CD4-positive, alpha-beta memory T cell (primary cell): ENCODE measurements at regions of chr20 and their contacts with region 1.

Region 1: DNA sequence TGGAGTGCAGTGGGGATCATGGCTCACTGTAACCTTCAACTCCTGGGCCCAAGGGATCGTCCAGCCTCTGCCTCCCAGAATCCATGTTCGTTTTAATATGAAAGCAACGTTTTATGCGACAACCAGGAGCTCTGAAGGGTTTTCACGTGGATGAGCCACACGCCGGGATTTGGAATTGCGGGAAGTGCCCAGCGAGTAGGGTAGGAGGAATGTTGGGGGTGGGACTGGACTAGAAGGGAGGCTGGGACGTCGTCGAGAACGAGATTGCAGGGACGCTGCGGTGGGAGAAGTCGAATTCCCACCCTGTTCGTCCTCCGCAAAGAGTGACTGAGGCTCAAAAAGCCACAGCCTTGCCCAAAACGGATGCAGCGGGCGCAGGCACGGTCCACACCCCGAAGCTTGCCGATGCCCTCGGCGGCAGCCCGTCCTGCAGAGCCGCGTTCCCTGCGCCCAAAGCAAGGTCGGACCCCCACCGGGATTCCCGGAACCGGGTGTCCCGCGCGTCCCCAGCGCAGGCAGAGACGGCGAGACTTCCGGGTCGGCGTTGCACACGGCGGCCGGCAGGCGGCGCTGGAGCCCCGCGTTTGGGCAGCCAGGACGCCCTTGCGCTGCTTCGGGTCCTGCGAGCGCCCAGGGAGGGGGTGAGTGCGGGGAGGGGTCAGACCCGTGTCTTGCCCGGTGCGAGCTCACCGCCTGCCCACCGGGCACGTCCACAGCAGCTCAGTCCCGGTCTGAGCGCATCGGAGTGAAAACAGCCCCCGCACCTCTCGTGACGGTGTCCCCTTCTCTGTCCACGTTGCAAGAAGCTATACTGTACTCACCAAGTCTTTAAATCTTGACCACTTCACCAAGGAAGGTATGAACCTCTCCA is 87.8 kb downstream of the DHX35 start:
- DNase-seq: peak; percentile 67 to 83 (median 76)
- H3K4me3 ChIP-seq: peak overlapping the region; percentile 73 to 74
- H3K4me3 Mint-ChIP-seq: peak overlapping the region; percentile 83 to 93 (median 88)
- H3K27ac ChIP-seq: peak overlapping the region; percentile 45
- H3K27ac Mint-ChIP-seq: peak overlapping the region in 6 of 7 donors; percentile 30 to 93 (median 89)
- H3K4me1 ChIP-seq: peaks cover 11% of the 10 kb centered on the region
- H3K4me1 Mint-ChIP-seq: peaks cover 6 to 12% (median 9%) of the 10 kb centered on the region in 4 donors
- H3K27me3 ChIP-seq: no peaks in the 10 kb centered on the region
- H3K27me3 Mint-ChIP-seq: peaks cover 0 to 6% of the 10 kb centered on the region in 2 donors

Region 2: GRCh38 chr20:38645980-38646858 is 403.7 kb before region 1 on chr20:
- CTCF ChIA-PET with region 1: interaction called, 26 read pairs
- POLR2A ChIA-PET with region 1: no interaction called
- intact Hi-C with region 1: loop called (anchors 1 kb)
- DNase-seq: peak; percentile 84 to 91 (median 88)
- H3K4me3 ChIP-seq: peak overlapping the region in 1 of 2 donors; percentile 39
- H3K4me3 Mint-ChIP-seq: peak overlapping the region; percentile 67 to 87 (median 82)
- H3K27ac ChIP-seq: no peak overlapping the region
- H3K27ac Mint-ChIP-seq: peak overlapping the region in 6 of 7 donors; percentile 52 to 88 (median 75)
- H3K4me1 ChIP-seq: peaks cover 11% of the 10 kb centered on the region
- H3K4me1 Mint-ChIP-seq: peaks cover 5 to 8% (median 7%) of the 10 kb centered on the region in 4 donors
- H3K27me3 ChIP-seq: peaks cover 9% of the 10 kb centered on the region
- H3K27me3 Mint-ChIP-seq: peaks cover 24 to 36% of the 10 kb centered on the region in 2 donors

Region 3: GRCh38 chr20:38715646-38716045 is 334.3 kb before region 1 on chr20:
- CTCF ChIA-PET with region 1: no interaction called
- POLR2A ChIA-PET with region 1: no interaction called
- intact Hi-C with region 1: no loop called
- DNase-seq: no peak
- H3K4me3 ChIP-seq: no peak overlapping the region
- H3K4me3 Mint-ChIP-seq: no peak overlapping the region
- H3K27ac ChIP-seq: no peak overlapping the region
- H3K27ac Mint-ChIP-seq: peak overlapping the region in 1 of 7 donors; percentile 36
- H3K4me1 ChIP-seq: no peaks in the 10 kb centered on the region
- H3K4me1 Mint-ChIP-seq: no peaks in the 10 kb centered on the region
- H3K27me3 ChIP-seq: peaks cover 12% of the 10 kb centered on the region
- H3K27me3 Mint-ChIP-seq: peaks cover 41 to 66% of the 10 kb centered on the region in 2 donors

Region 4: DNA sequence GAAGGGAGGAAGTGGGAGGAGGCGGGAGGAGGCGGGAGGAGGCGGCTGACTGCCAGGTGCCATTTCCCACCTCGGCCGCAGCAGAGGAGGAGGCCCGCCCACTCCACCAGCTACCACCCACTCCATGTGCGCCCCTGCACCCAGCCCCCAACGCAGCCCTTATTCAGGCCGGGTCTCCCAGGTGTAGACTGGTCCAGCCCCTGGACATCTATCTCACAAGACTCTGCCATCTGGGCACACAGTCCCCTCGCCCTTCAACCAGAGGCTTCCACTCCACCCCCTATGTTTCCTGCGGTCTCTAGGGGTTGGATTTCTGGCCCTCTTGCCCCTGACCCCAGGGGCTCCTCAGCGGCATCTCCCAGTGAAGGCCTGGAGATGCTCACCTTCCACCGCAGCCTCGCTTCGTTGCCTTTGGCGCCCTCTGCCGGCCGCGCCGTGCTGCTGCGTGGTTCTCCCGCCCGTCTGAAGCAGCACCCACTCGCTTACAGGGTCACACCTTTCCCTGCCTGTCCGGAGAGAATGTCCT is 156.3 kb before region 1 on chr20:
- CTCF ChIA-PET with region 1: interaction called, 26 read pairs
- POLR2A ChIA-PET with region 1: no interaction called
- intact Hi-C with region 1: no loop called
- DNase-seq: peak; percentile 74 to 84 (median 79)
- H3K4me3 ChIP-seq: peak overlapping the region in 1 of 2 donors; percentile 25
- H3K4me3 Mint-ChIP-seq: peak overlapping the region; percentile 22 to 75 (median 67)
- H3K27ac ChIP-seq: peak overlapping the region; percentile 64
- H3K27ac Mint-ChIP-seq: peak overlapping the region; percentile 90 to 96 (median 93)
- H3K4me1 ChIP-seq: peaks cover 36% of the 10 kb centered on the region
- H3K4me1 Mint-ChIP-seq: peaks cover 24 to 41% (median 28%) of the 10 kb centered on the region in 4 donors
- H3K27me3 ChIP-seq: no peaks in the 10 kb centered on the region
- H3K27me3 Mint-ChIP-seq: no peaks in the 10 kb centered on the region

Region 5: GRCh38 chr20:38985603-38986170 is 64.2 kb before region 1 on chr20:
- CTCF ChIA-PET with region 1: interaction called, 17 read pairs
- POLR2A ChIA-PET with region 1: no interaction called
- intact Hi-C with region 1: no loop called
- DNase-seq: no peak
- H3K4me3 ChIP-seq: no peak overlapping the region
- H3K4me3 Mint-ChIP-seq: no peak overlapping the region
- H3K27ac ChIP-seq: no peak overlapping the region
- H3K27ac Mint-ChIP-seq: peak overlapping the region in 1 of 7 donors; percentile 22
- H3K4me1 ChIP-seq: no peaks in the 10 kb centered on the region
- H3K4me1 Mint-ChIP-seq: peaks cover 0 to 13% (median 7%) of the 10 kb centered on the region in 4 donors
- H3K27me3 ChIP-seq: no peaks in the 10 kb centered on the region
- H3K27me3 Mint-ChIP-seq: no peaks in the 10 kb centered on the region

Region 6: GRCh38 chr20:39029324-39029820 is 20.5 kb before region 1 on chr20:
- CTCF ChIA-PET with region 1: interaction called, 60 read pairs
- POLR2A ChIA-PET with region 1: no interaction called
- intact Hi-C with region 1: no loop called
- DNase-seq: no peak
- H3K4me3 ChIP-seq: no peak overlapping the region
- H3K4me3 Mint-ChIP-seq: no peak overlapping the region
- H3K27ac ChIP-seq: no peak overlapping the region
- H3K27ac Mint-ChIP-seq: no peak overlapping the region
- H3K4me1 ChIP-seq: peaks cover 19% of the 10 kb centered on the region
- H3K4me1 Mint-ChIP-seq: peaks cover 17 to 24% (median 22%) of the 10 kb centered on the region in 4 donors
- H3K27me3 ChIP-seq: no peaks in the 10 kb centered on the region
- H3K27me3 Mint-ChIP-seq: no peaks in the 10 kb centered on the region

Region 7: GRCh38 chr20:39278230-39278788 is 228.4 kb after region 1 on chr20:
- CTCF ChIA-PET with region 1: no interaction called
- POLR2A ChIA-PET with region 1: no interaction called
- intact Hi-C with region 1: no loop called
- DNase-seq: no peak
- H3K4me3 ChIP-seq: no peak overlapping the region
- H3K4me3 Mint-ChIP-seq: no peak overlapping the region
- H3K27ac ChIP-seq: no peak overlapping the region
- H3K27ac Mint-ChIP-seq: no peak overlapping the region
- H3K4me1 ChIP-seq: no peaks in the 10 kb centered on the region
- H3K4me1 Mint-ChIP-seq: no peaks in the 10 kb centered on the region
- H3K27me3 ChIP-seq: no peaks in the 10 kb centered on the region
- H3K27me3 Mint-ChIP-seq: peaks cover 7 to 9% of the 10 kb centered on the region in 2 donors

Region 8: GRCh38 chr20:40962730-40963504 is 1913.0 kb after region 1 on chr20:
- CTCF ChIA-PET with region 1: interaction called, 11 read pairs
- POLR2A ChIA-PET with region 1: no interaction called
- intact Hi-C with region 1: no loop called
- DNase-seq: peak; percentile 64 to 68 (median 65)
- H3K4me3 ChIP-seq: no peak overlapping the region
- H3K4me3 Mint-ChIP-seq: peak overlapping the region in 1 of 8 donors; percentile 4
- H3K27ac ChIP-seq: no peak overlapping the region
- H3K27ac Mint-ChIP-seq: no peak overlapping the region
- H3K4me1 ChIP-seq: peaks cover 16% of the 10 kb centered on the region
- H3K4me1 Mint-ChIP-seq: peaks cover 7 to 13% (median 8%) of the 10 kb centered on the region in 4 donors
- H3K27me3 ChIP-seq: no peaks in the 10 kb centered on the region
- H3K27me3 Mint-ChIP-seq: peaks cover 0 to 3% of the 10 kb centered on the region in 2 donors